Endothelial cell of umbilical vein (primary cell): ENCODE measurements at regions of chr17 and their contacts with region 1.

Region 1: GRCh38 chr17:9291912-9292560 is 270.7 kb downstream of the NTN1 start:
- DNase-seq: peak; percentile 41
- H3K4me3 ChIP-seq: no peak overlapping the region
- H3K27ac ChIP-seq: no peak overlapping the region
- H3K4me1 ChIP-seq: no peaks in the 10 kb centered on the region
- H3K27me3 ChIP-seq: no peaks in the 10 kb centered on the region
- CTCF ChIP-seq: peak; percentile 56 to 69
- POLR2A ChIP-seq: no peak

Region 2: DNA sequence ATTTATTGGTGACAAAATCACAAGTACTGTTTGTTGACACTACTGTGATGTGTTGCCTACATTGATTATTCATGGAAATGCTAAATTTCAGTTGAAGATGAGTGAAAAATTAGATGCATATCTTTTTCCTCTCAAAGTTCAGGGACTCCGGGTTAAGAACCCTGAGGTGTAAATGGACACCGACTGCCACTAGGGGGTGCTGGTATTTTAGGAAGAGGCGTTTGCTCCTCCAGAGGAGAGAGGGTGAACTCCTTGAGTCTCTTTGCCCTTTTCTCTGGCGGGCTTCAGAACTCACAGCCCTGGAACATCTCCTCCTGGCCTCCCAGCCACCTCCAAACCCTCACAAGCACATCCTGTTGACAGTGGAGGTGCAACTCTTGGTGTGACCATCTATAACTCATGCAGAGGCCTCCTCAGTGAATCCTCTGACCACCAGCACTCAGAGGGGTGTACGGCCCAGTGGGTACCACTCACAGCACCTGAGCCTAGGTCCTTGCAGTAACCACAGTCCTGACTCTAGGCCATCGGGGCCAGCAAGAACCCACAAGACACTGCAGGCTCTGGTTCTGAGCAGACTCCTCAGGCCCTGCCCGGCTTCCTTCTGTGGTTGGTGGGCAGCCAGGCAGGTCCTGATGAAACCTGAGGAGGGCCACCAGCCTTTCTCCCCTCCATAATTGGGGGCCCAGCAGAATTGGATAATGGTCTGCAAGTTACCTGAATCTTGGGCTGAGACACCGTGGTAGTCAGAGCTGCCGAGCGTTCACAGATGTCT is 300.3 kb before region 1 on chr17:
- CTCF ChIA-PET with region 1: interaction called, 5 read pairs
- POLR2A ChIA-PET with region 1: no interaction called
- dilution Hi-C with region 1: no loop called
- intact Hi-C with region 1: loop called (anchors 5 kb)
- DNase-seq: peak; percentile 33
- H3K4me3 ChIP-seq: no peak overlapping the region
- H3K27ac ChIP-seq: no peak overlapping the region
- H3K4me1 ChIP-seq: no peaks in the 10 kb centered on the region
- H3K27me3 ChIP-seq: no peaks in the 10 kb centered on the region
- CTCF ChIP-seq: peak; percentile 65 to 71
- POLR2A ChIP-seq: no peak

Region 3: GRCh38 chr17:9115446-9116191 is 176.4 kb before region 1 on chr17:
- CTCF ChIA-PET with region 1: no interaction called
- POLR2A ChIA-PET with region 1: no interaction called
- dilution Hi-C with region 1: no loop called
- intact Hi-C with region 1: no loop called
- DNase-seq: peak; percentile 4
- H3K4me3 ChIP-seq: no peak overlapping the region
- H3K27ac ChIP-seq: no peak overlapping the region
- H3K4me1 ChIP-seq: no peaks in the 10 kb centered on the region
- H3K27me3 ChIP-seq: no peaks in the 10 kb centered on the region
- CTCF ChIP-seq: no peak
- POLR2A ChIP-seq: no peak

Region 4: GRCh38 chr17:9247401-9247938 is 44.6 kb before region 1 on chr17:
- CTCF ChIA-PET with region 1: no interaction called
- POLR2A ChIA-PET with region 1: no interaction called
- dilution Hi-C with region 1: no loop called
- intact Hi-C with region 1: no loop called
- DNase-seq: no peak
- H3K4me3 ChIP-seq: no peak overlapping the region
- H3K27ac ChIP-seq: no peak overlapping the region
- H3K4me1 ChIP-seq: no peaks in the 10 kb centered on the region
- H3K27me3 ChIP-seq: no peaks in the 10 kb centered on the region
- CTCF ChIP-seq: no peak
- POLR2A ChIP-seq: no peak

Region 5: DNA sequence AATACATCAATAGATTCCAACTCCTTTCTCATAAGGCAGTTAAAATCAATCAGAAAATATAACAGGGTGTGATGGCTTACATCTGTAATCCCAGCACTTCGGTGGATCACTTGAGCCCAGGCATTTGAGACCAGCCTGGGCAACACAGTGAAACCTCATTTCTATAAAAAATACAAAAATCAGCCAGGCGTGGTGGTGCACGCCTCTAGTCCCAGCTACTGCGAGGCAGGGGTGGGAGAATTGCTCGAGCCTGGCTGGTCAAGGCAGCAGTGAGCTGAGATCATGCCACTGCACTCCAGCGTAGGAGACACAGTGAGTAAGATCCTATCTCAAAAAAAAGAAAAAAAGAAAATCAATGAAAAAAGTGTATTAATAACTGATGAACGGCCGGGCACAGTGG is 12.1 kb before region 1 on chr17:
- CTCF ChIA-PET with region 1: interaction called, 14 read pairs
- POLR2A ChIA-PET with region 1: no interaction called
- dilution Hi-C with region 1: no loop called
- intact Hi-C with region 1: no loop called
- DNase-seq: no peak
- H3K4me3 ChIP-seq: no peak overlapping the region
- H3K27ac ChIP-seq: no peak overlapping the region
- H3K4me1 ChIP-seq: no peaks in the 10 kb centered on the region
- H3K27me3 ChIP-seq: no peaks in the 10 kb centered on the region
- CTCF ChIP-seq: no peak
- POLR2A ChIP-seq: no peak